Gastrocnemius medialis (tissue), 4 donors: ENCODE measurements at regions of chr10 and their contacts with region 1.

Region 1: DNA sequence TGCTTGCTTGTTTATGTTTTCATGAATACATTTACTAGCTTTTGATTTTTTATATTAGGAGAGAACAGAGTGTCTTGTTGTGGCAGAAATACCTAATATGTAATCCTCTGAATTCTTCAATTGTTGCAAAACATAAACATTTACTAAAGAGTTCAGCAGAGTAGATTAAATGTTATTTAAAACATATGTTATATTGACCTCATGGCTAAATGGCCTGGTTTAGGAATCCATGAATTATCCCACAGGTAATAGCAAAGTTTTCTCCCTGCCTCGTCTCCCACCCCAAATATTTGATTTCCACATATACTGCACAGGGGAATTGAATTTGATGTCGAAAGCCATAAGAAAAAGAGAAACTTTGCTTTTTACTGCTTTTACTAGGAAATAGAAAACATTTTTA is 111.8 kb downstream of the ADK start:
- DNase-seq: no peak
- ATAC-seq: no peak
- H3K4me3 ChIP-seq: no peak overlapping the region
- H3K27ac ChIP-seq: no peak overlapping the region
- H3K4me1 ChIP-seq: no peaks in the 10 kb centered on the region
- H3K27me3 ChIP-seq: no peaks in the 10 kb centered on the region
- CTCF ChIP-seq: no peak
- POLR2A ChIP-seq: no peak

Region 2: GRCh38 chr10:75021379-75022249 is 758.8 kb after region 1 on chr10:
- in situ Hi-C with region 1: loop called in 2 of 4 experiments (anchors 10 kb)
- intact Hi-C with region 1: loop called (anchors 5 kb)
- DNase-seq: no peak
- ATAC-seq: no peak
- H3K4me3 ChIP-seq: no peak overlapping the region
- H3K27ac ChIP-seq: peak overlapping the region in 3 of 4 donors; percentile 7 to 46 (median 27)
- H3K4me1 ChIP-seq: peaks cover 4 to 30% of the 10 kb centered on the region in 2 donors
- H3K27me3 ChIP-seq: no peaks in the 10 kb centered on the region
- CTCF ChIP-seq: no peak
- POLR2A ChIP-seq: no peak

Region 3: DNA sequence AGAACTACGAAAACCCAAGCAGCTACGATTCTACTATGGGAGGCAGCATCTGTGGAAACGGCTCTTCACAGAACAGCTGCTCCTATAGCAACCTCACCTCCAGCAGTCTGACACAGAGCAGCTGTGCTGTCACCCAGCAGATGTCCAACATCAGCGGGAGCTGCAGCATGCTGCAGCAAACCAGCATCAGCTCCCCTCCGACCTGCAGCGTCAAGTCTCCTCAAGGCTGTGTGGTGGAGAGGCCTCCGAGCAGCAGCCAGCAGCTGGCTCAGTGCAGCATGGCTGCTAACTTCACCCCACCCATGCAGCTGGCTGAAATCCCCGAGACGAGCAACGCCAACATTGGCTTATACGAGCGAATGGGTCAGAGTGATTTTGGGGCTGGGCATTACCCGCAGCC is 767.0 kb after region 1 on chr10:
- in situ Hi-C with region 1: loop called in 2 of 4 experiments (anchors 10 kb)
- intact Hi-C with region 1: no loop called
- DNase-seq: no peak
- ATAC-seq: no peak
- H3K4me3 ChIP-seq: no peak overlapping the region
- H3K27ac ChIP-seq: no peak overlapping the region
- H3K4me1 ChIP-seq: peaks cover 16 to 22% of the 10 kb centered on the region in 2 donors
- H3K27me3 ChIP-seq: no peaks in the 10 kb centered on the region
- CTCF ChIP-seq: no peak
- POLR2A ChIP-seq: no peak

Region 4: DNA sequence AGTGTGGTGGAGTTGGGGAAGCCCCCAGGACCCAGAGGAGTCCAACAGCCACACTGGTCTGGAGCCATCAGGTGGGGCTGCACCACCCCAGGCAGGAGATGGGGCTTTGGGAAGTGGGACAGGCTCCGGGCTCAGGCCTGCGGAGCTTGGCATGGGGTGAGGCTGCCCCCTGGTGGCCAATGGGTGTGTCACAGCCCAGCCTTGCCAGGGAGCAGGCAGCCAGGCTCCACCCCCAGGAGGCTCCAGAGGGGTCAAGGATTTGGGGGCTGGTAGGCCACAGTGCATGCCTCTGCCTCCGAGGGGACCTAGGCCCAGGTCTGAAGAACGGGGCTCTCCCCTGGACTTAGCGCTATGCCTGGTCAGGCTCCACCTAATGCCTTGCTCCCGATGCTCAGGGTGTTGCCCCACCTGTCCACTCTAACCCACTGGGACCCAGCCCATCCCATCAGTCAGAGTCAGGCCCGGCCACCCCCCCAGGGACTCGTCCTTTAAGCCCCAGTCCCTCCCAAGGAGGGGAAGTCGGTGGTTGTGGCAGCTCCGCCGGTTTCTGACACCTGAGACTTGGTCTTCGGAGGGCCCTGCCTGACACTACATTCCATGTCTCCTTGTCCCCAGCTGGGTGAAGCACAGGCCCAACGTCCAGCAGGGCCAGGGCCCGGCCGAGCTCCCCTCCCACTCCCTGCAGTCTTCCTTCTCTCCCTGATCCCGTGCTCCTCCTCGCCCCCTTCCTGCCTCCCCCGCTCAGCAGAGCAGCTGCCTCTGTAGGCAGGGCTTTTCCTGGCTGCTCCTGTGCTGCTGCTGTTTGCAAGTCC is 837.3 kb after region 1 on chr10:
- in situ Hi-C with region 1: loop called (anchors 5 to 10 kb)
- intact Hi-C with region 1: loop called (anchors 1 kb)
- DNase-seq: peak; percentile 61 to 75
- ATAC-seq: peak; percentile 57 to 76
- H3K4me3 ChIP-seq: no peak overlapping the region
- H3K27ac ChIP-seq: peak overlapping the region; percentile 97 to 100 (median 98)
- H3K4me1 ChIP-seq: peaks cover 57% of the 10 kb centered on the region in 2 donors
- H3K27me3 ChIP-seq: no peaks in the 10 kb centered on the region
- CTCF ChIP-seq: peak; percentile 97 to 99 (median 99)
- POLR2A ChIP-seq: no peak

Region 5: DNA sequence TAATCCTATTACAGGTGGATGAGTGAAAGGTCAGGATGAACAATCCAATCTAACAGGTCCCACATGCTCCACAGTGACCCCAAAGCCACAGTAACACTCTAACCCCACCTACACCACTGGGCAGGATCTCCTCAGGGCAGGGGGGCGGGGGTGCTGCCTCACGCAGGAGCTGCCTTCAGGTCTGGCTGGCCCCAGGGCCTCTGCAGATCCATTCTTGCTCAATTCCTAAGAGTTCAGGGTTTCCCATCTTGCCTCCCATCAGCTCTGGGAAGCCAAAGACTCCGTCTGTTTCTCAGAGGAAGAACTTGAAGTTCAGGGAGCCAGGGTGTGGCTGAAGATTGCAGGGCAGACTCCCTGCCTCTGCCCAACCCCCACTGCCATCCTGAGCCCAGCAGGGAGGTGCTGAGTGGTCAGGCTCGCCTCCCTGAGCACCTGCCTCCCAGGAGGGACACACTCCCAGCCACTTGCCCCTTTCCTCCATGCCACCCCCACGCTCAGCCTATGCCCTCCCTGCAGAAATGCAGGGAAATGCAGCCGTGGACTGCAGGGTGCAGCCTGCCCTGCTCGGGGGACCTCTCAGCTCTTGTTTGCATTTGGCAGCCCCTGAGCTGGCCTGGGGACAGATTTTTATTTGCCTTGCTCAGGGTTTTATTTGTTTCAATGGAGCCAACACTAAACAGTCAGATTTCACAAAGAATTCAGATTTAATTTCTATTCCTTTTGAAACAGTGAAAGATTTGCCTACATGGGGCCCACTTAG is 982.8 kb after region 1 on chr10:
- in situ Hi-C with region 1: loop called in 2 of 4 experiments (anchors 10 to 25 kb)
- intact Hi-C with region 1: no loop called
- DNase-seq: no peak
- ATAC-seq: no peak
- H3K4me3 ChIP-seq: no peak overlapping the region
- H3K27ac ChIP-seq: no peak overlapping the region
- H3K4me1 ChIP-seq: peaks cover 0 to 2% of the 10 kb centered on the region in 2 donors
- H3K27me3 ChIP-seq: no peaks in the 10 kb centered on the region
- CTCF ChIP-seq: no peak
- POLR2A ChIP-seq: no peak